K562 (cell line): ENCODE measurements at regions of chr11 and their contacts with region 1.

Region 1: DNA sequence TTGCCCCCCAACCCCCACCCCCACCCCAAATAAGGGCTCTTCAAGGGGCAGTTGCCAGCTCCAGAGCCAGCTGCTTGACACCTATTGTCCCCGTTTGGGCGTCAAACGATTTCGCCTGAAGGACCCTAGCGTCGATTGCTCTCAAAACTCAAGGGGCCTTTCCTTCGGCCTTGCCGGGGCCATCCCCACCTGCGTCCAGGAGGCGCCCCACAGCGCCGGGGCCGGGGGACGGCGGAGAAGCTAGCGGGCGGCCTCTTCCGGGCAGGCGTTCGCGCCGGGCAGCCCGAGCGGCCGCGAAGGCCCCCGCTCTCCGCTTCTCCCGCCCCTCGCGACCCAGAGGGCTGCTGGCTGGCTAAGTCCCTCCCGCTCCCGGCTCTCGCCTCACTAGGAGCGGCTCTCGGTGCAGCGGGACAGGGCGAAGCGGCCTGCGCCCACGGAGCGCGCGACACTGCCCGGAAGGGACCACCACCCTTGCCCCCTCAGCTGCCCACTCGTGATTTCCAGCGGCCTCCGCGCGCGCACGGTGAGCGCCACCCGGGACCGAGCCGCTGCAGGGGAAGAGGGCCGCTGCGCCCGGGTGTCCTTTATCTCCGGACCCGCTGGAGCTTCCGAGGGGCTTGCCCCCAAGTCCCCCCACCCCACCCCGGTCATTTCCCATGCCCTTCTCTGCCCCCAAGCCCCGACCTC is at the start of gene CAPRIN1:
- DNase-seq: peak; percentile 87 to 95 (median 90)
- ATAC-seq: peak; percentile 84
- H3K4me3 ChIP-seq: peak within 1 kb of the TSS; percentile 97
- H3K27ac ChIP-seq: peak within 1 kb of the TSS; percentile 97
- H3K4me1 ChIP-seq: peaks cover 13 to 29% of the 10 kb centered on the region in 2 experiments
- H3K27me3 ChIP-seq: no peaks in the 10 kb centered on the region
- CTCF ChIP-seq: peak in 2 of 3 experiments; percentile 32 to 49; a peak in 3 of 6 replicates
- EP300 ChIP-seq: no peak
- POLR2A ChIP-seq: peak; percentile 93
- RAD21 ChIP-seq: 0 out of 4 replicates have a peak, but pooled peaks of 1 of the 2 experiments have one; percentile 22
- polyA plus RNA-seq, gene CAPRIN1: 49.6 to 51.8 TPM

Region 2: GRCh38 chr11:34068111-34068510 is 16.6 kb after region 1 on chr11:
- CTCF ChIA-PET with region 1: interaction called, 5 read pairs
- POLR2A ChIA-PET with region 1: interaction called, 30 read pairs
- in situ Hi-C with region 1: no loop called
- intact Hi-C with region 1: loop called (anchors 2 kb)
- DNase-seq: no peak
- ATAC-seq: peak; percentile 46
- H3K4me3 ChIP-seq: no peak overlapping the region
- H3K27ac ChIP-seq: no peak overlapping the region
- H3K4me1 ChIP-seq: peaks cover 3 to 4% of the 10 kb centered on the region in 2 experiments; a peak in 4 of 5 replicates
- H3K27me3 ChIP-seq: no peaks in the 10 kb centered on the region
- CTCF ChIP-seq: no peak
- EP300 ChIP-seq: no peak
- POLR2A ChIP-seq: peak; percentile 47; the same call in 1 of the 2 replicates
- RAD21 ChIP-seq: no peak

Region 3: GRCh38 chr11:34105079-34105956 is 53.8 kb after region 1 on chr11 and contains the start of gene NAT10:
- CTCF ChIA-PET with region 1: no interaction called
- POLR2A ChIA-PET with region 1: interaction called, 14 read pairs
- in situ Hi-C with region 1: no loop called
- intact Hi-C with region 1: loop called (anchors 2 kb)
- DNase-seq: peak; percentile 91 to 99 (median 94)
- ATAC-seq: peak; percentile 87
- H3K4me3 ChIP-seq: peak within 1 kb of the TSS; percentile 83
- H3K27ac ChIP-seq: peak within 1 kb of the TSS; percentile 98
- H3K4me1 ChIP-seq: peaks cover 0 to 6% of the 10 kb centered on the region in 2 experiments; a peak in 3 of 5 replicates
- H3K27me3 ChIP-seq: no peaks in the 10 kb centered on the region
- CTCF ChIP-seq: peak in 2 of 3 experiments; percentile 16 to 25; a peak in 3 of 6 replicates
- EP300 ChIP-seq: no peak; the same call in 1 of the 2 replicates
- POLR2A ChIP-seq: peak; percentile 96
- RAD21 ChIP-seq: peak; percentile 3 to 26; a peak in 3 of 4 replicates
- polyA plus RNA-seq, gene NAT10: 55.4 to 122 TPM

Region 4: DNA sequence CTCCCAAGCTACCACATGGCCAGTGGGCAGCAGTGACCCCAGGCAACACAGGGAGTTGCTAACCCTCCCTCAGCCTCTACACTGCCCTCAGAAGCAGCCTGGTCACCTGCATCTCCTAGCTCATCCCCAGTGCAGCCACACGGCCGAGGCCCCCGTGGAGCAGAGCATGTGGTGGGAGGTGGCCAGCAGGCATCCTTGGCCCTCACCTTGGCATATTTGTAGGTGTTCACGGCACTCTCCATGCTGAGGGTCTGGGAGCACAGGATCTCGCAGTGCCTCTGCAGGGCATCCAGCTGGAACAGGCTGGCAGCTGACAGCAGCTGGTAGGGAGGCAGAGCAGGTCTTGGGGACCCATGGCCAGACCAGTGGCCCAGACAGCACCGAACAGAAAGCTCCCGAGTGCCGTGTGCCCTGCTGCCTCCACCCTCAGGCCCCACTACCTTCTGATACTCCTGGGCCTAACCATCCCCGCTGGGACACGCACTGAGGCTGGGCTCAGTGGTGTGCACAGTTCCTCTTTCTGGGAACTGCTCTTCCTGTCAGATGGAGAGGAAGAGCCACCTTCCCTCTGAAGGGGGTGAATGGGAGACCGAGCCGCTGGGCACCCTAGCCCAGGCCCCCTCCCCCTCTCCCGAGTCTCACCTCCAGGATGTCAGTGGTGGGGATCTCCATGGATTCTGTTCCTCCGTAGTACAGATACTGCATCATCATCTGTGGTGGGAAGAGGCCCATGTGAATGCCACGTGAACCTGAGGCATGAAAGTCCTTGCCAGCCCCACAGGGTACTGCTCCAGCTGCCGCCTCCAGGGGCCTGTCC is 102.8 kb after region 1 on chr11:
- CTCF ChIA-PET with region 1: no interaction called
- POLR2A ChIA-PET with region 1: no interaction called
- in situ Hi-C with region 1: no loop called
- intact Hi-C with region 1: no loop called
- DNase-seq: no peak
- ATAC-seq: no peak
- H3K4me3 ChIP-seq: no peak overlapping the region
- H3K27ac ChIP-seq: no peak overlapping the region
- H3K4me1 ChIP-seq: peaks cover 0 to 9% of the 10 kb centered on the region in 2 experiments; a peak in 1 of 5 replicates
- H3K27me3 ChIP-seq: no peaks in the 10 kb centered on the region
- CTCF ChIP-seq: no peak
- EP300 ChIP-seq: no peak
- POLR2A ChIP-seq: no peak
- RAD21 ChIP-seq: no peak